CD8-positive, alpha-beta T cell (primary cell): ENCODE measurements at regions of chr2 and their contacts with region 1.

Region 1: GRCh38 chr2:70086838-70087701 is at the start of gene PCBP1:
- DNase-seq: peak; percentile 95 to 100 (median 98)
- ATAC-seq: peak; percentile 60
- H3K4me3 ChIP-seq: peak within 1 kb of the TSS; percentile 95 to 98
- H3K4me3 Mint-ChIP-seq: peak within 1 kb of the TSS; percentile 98
- H3K27ac ChIP-seq: peak within 1 kb of the TSS; percentile 99
- H3K27ac Mint-ChIP-seq: peak within 1 kb of the TSS; percentile 100
- H3K4me1 ChIP-seq: peaks cover 62% of the 10 kb centered on the region
- H3K4me1 Mint-ChIP-seq: peaks cover 69% of the 10 kb centered on the region
- H3K27me3 ChIP-seq: no peaks in the 10 kb centered on the region
- H3K27me3 Mint-ChIP-seq: no peaks in the 10 kb centered on the region
- CTCF ChIP-seq: no peak
- total RNA-seq, gene PCBP1: 239 to 255 TPM

Region 2: GRCh38 chr2:70124983-70125480 is 38.0 kb after region 1 on chr2:
- CTCF ChIA-PET with region 1: interaction called, 16 read pairs
- POLR2A ChIA-PET with region 1: interaction called, 325 read pairs
- intact Hi-C with region 1: loop called (anchors 1 to 2 kb)
- DNase-seq: peak; percentile 52 to 85 (median 70)
- ATAC-seq: peak; percentile 64
- H3K4me3 ChIP-seq: peak overlapping the region; percentile 47 to 61
- H3K4me3 Mint-ChIP-seq: peak overlapping the region; percentile 95
- H3K27ac ChIP-seq: peak overlapping the region; percentile 97
- H3K27ac Mint-ChIP-seq: peak overlapping the region; percentile 100
- H3K4me1 ChIP-seq: peaks cover 62% of the 10 kb centered on the region
- H3K4me1 Mint-ChIP-seq: peaks cover 70% of the 10 kb centered on the region
- H3K27me3 ChIP-seq: no peaks in the 10 kb centered on the region
- H3K27me3 Mint-ChIP-seq: no peaks in the 10 kb centered on the region
- CTCF ChIP-seq: no peak

Region 3: GRCh38 chr2:70258532-70258874 is 171.4 kb after region 1 on chr2:
- CTCF ChIA-PET with region 1: no interaction called
- POLR2A ChIA-PET with region 1: interaction called, 8 read pairs
- intact Hi-C with region 1: loop called in 1 of 2 experiments (anchors 2 kb)
- DNase-seq: no peak
- ATAC-seq: no peak
- H3K4me3 ChIP-seq: peak overlapping the region; percentile 62 to 88
- H3K4me3 Mint-ChIP-seq: peak overlapping the region; percentile 86
- H3K27ac ChIP-seq: peak overlapping the region in 1 of 2 experiments; percentile 54
- H3K27ac Mint-ChIP-seq: peak overlapping the region; percentile 77
- H3K4me1 ChIP-seq: peaks cover 15% of the 10 kb centered on the region
- H3K4me1 Mint-ChIP-seq: peaks cover 42% of the 10 kb centered on the region
- H3K27me3 ChIP-seq: no peaks in the 10 kb centered on the region
- H3K27me3 Mint-ChIP-seq: no peaks in the 10 kb centered on the region
- CTCF ChIP-seq: no peak